Dorsolateral prefrontal cortex (tissue), 120 donors: ENCODE measurements at regions of chr9 and their contacts with region 1.

Region 1: DNA sequence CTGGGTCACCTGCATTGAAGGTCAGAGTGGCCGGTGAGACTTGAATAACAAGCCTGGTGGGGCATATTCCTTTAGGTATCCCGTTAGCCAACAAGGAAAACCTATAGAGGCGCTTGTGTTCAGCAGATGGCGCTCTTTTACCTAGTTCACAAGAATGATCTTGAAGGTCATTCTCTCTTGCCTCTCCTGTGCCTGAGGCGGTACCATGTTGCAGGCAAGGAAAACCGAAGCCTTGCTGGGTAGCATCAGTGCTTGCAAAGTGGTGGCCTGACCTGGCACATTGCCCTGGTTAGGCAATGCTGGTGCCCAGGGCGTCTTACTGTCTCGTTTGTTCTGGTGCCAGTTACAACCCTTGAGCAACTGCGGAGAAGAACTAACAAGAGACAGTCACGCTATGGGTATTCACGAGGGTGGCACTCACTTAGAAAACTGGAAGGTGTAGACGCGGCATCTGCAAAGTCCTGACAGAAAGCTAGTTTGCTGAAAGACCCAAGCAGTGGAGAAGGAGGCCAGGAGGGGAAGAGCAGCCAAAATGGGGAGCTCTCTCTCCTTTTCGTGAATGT is 56.7 kb downstream of the AOPEP start:
- DNase-seq: peak; percentile 32 to 87 (median 67)
- H3K4me3 ChIP-seq: peak overlapping the region in 11 of 59 donors; percentile 10 to 28 (median 19)
- H3K27ac ChIP-seq: peak overlapping the region in 57 of 59 donors; percentile 2 to 91 (median 81)
- H3K27me3 ChIP-seq: no peaks in the 10 kb centered on the region
- CTCF ChIP-seq: peak in 55 of 56 donors; percentile 27 to 86 (median 70)

Region 2: DNA sequence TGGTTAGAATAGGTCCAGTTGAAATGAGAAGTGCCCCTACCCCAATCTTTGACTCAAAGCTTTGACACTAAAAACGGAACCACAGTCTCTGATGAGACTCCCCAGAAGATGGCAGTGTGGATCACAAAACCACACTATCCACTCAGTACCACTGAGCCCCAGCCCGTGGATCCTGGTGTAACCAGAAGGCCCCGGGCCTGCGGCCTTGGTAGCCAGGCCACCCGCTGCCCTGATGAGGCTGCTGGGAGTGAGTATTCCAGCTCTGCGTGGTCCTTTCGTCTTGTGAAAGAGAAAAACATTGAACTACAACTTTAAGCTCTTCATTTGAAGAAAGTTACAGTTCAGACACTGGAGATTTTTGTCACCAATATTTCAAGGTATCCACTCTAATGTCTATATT is 101.7 kb before region 1 on chr9:
- intact Hi-C with region 1: loop called in 1 of 2 experiments (anchors 5 kb)
- DNase-seq: peak; percentile 70 to 88 (median 80)
- H3K4me3 ChIP-seq: peak overlapping the region in 6 of 59 donors; percentile 8 to 27 (median 23)
- H3K27ac ChIP-seq: peak overlapping the region in 45 of 59 donors; percentile 4 to 83 (median 56)
- H3K27me3 ChIP-seq: no peaks in the 10 kb centered on the region
- CTCF ChIP-seq: peak; percentile 32 to 96 (median 86)

Region 3: GRCh38 chr9:94805585-94805984 is 22.4 kb after region 1 on chr9:
- intact Hi-C with region 1: no loop called
- DNase-seq: no peak
- H3K4me3 ChIP-seq: peak overlapping the region in 13 of 59 donors; percentile 4 to 33 (median 15)
- H3K27ac ChIP-seq: peak overlapping the region in 46 of 59 donors; percentile 0 to 76 (median 50)
- H3K27me3 ChIP-seq: no peaks in the 10 kb centered on the region
- CTCF ChIP-seq: no peak

Region 4: GRCh38 chr9:94847486-94847885 is 64.3 kb after region 1 on chr9:
- intact Hi-C with region 1: no loop called
- DNase-seq: no peak
- H3K4me3 ChIP-seq: no peak overlapping the region
- H3K27ac ChIP-seq: peak overlapping the region in 1 of 59 donors; percentile 1
- H3K27me3 ChIP-seq: no peaks in the 10 kb centered on the region
- CTCF ChIP-seq: no peak

Region 5: GRCh38 chr9:94900222-94901018 is 117.2 kb after region 1 on chr9:
- intact Hi-C with region 1: loop called in 1 of 2 experiments (anchors 5 kb)
- DNase-seq: no peak
- H3K4me3 ChIP-seq: peak overlapping the region in 5 of 59 donors; percentile 1 to 26 (median 9)
- H3K27ac ChIP-seq: peak overlapping the region in 58 of 59 donors; percentile 11 to 99 (median 81)
- H3K27me3 ChIP-seq: no peaks in the 10 kb centered on the region
- CTCF ChIP-seq: no peak

Region 6: DNA sequence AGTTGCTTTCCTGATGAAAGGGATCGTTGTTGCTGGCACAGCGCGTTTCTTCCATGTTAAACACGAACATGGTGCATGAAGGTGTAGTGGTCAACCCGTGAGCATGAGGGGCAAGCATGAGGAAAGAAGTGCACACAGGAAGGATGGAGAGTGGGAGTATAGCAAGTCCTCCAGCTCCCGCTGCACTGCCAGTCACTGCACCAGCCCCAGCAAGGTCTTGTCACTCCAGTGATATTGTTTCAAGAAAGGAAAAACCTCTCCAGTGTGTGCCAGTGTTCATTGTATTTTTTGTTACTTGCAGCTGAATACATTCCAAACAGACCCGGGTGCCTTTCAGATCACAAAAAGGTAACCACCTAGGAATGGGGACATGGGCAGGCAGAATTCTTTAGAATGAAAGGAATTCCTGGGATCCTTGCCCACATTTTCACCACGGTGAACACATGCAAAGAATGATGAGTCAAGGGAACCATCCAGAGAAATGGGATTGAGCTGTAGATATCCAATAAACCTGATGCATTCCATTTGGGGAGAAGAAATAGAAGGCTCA is 129.6 kb after region 1 on chr9:
- intact Hi-C with region 1: loop called (anchors 5 kb)
- DNase-seq: peak in 1 of 10 donors; percentile 7
- H3K4me3 ChIP-seq: no peak overlapping the region
- H3K27ac ChIP-seq: peak overlapping the region; percentile 78 to 100 (median 94)
- H3K27me3 ChIP-seq: no peaks in the 10 kb centered on the region
- CTCF ChIP-seq: no peak

Region 7: GRCh38 chr9:94917840-94918753 is 134.9 kb after region 1 on chr9:
- intact Hi-C with region 1: loop called (anchors 5 kb)
- DNase-seq: no peak
- H3K4me3 ChIP-seq: no peak overlapping the region
- H3K27ac ChIP-seq: peak overlapping the region in 57 of 59 donors; percentile 9 to 100 (median 94)
- H3K27me3 ChIP-seq: no peaks in the 10 kb centered on the region
- CTCF ChIP-seq: peak in 1 of 56 donors; percentile 13

Region 8: GRCh38 chr9:94967482-94967881 is 184.3 kb after region 1 on chr9:
- intact Hi-C with region 1: loop called in 1 of 2 experiments (anchors 10 kb)
- DNase-seq: no peak
- H3K4me3 ChIP-seq: no peak overlapping the region
- H3K27ac ChIP-seq: peak overlapping the region in 12 of 59 donors; percentile 4 to 87 (median 79)
- H3K27me3 ChIP-seq: no peaks in the 10 kb centered on the region
- CTCF ChIP-seq: no peak

Region 9: DNA sequence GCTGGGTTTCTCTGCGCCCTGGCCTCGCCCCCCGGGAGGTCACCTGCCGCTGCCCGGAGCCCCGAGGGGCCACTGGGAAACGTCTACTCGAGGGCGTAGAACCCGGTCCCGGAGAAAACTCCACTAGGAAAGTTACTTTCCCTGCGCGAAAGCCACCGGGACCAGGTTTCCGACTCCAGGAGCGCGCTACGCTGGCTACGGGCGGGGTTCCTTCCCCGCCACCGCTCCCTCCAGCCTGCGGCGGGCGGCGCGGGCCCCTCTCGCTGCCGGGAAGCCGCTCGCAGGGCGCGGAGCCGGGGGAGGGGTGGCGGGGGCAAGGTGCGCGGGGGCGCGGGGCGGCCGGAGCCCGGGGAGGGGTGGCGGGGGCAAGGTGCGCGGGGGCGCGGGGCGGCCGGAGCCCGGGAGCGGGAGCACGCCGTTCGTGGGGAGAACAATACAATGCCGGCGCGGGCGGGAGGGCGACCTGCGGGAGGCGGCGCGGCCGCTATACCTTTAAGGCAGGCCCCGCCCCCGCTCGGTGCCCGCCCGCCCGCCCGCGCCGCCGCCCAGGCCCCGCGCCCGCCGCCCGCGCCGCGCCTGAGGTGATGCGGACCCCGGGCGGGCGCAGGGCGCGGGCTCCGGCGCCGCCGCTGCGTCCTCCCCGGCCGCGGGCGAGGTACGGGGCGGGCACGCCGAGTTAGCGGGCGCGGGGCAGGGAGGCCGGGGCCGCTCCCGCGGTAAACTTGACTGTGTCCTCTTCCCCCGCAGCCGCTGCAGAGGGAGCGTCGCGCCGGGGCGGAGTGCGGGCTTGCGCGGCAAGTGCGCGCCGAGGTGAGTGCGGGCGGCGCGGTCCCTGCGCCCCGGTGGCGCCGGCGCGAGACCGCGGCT is 221.5 kb after region 1 on chr9:
- intact Hi-C with region 1: loop called (anchors 5 kb)
- DNase-seq: peak in 5 of 10 donors; percentile 44 to 67 (median 60)
- H3K4me3 ChIP-seq: peak overlapping the region; percentile 56 to 90 (median 80)
- H3K27ac ChIP-seq: peak overlapping the region; percentile 75 to 98 (median 94)
- H3K27me3 ChIP-seq: no peaks in the 10 kb centered on the region
- CTCF ChIP-seq: peak in 5 of 56 donors; percentile 0 to 3 (median 2)

Region 10: DNA sequence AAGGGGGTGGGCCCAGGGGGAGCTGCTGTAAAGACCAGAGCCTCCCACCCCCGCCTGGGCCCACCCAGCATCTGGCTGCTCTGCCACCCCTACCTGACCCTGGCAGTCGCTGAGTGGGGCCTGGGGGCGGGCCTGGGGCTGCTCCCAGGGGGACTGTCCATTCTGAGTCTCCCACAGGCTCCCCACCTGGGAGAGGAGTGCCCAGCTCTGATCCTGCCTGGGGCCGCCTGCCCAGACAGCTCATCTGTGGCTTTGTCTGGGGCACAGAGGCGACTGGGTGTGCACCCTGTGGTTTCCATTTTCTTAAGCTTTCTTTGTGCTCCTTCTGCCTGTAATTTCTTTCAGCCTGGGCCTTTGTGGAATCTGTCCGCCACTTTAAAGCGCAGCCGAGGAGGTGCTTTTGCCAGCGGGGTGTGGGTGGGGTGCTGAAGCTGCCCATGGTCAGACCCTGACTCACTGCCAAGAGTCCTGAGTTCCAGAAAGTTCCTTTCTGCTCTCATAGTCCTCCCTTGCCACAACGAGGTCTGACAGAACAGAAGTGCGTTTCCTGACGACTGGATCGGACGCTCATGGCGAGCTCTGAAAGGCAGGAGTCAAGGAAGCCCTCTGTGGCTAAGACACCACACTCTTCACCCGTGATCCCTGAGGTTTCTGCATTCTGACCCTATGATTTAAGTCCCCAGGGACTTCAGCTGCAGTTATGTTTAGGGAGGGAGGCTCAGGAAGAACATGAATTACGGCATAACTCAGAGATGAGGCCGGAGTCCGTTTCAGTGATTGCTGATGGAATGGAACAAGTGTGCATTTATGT is 309.3 kb after region 1 on chr9:
- intact Hi-C with region 1: no loop called
- DNase-seq: peak in 1 of 10 donors; percentile 25
- H3K4me3 ChIP-seq: no peak overlapping the region
- H3K27ac ChIP-seq: peak overlapping the region in 58 of 59 donors; percentile 2 to 100 (median 92)
- H3K27me3 ChIP-seq: no peaks in the 10 kb centered on the region
- CTCF ChIP-seq: no peak